Activated T-helper 2 cell treated with anti-CD3 and anti-CD28 coated beads, Interferon-gamma antibody, Interleukin-2, Interleukin-4, amounts not matched to agents 10 μg/mL and 5 μg/mL and 100 μg/mL, durations not matched to agents 14 hours and 24 hours and 36 hours (primary cell): ENCODE measurements at regions of chr6 and their contacts with region 1.

Region 1: GRCh38 chr6:111478749-111479148 is 4.3 kb downstream of the REV3L start:
- DNase-seq: no peak
- H3K4me3 Mint-ChIP-seq: no peak overlapping the region
- H3K27ac Mint-ChIP-seq: no peak overlapping the region
- H3K4me1 Mint-ChIP-seq: peaks cover 42% of the 10 kb centered on the region
- H3K27me3 Mint-ChIP-seq: no peaks in the 10 kb centered on the region

Region 2: DNA sequence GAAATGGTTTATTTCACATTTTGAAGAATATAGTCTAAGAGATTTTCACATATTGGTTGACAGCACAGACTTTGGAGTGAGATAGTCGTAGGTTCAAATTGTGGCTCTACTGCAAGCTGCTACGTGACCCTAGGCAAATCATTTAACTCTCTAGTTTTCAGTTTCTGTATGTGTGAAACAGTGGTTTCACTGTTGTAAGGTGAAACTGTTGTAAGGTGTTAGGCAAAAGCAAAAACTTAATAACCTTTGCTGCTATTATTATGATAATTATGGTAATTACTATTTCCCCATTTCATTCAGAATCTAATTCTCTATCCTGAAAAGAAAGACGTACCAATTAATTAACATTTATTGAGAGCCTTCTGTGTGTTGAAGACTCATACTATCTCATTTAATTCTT is 139.9 kb before region 1 on chr6:
- intact Hi-C with region 1: loop called (anchors 2 kb)
- DNase-seq: no peak
- H3K4me3 Mint-ChIP-seq: no peak overlapping the region
- H3K27ac Mint-ChIP-seq: peak overlapping the region; percentile 1
- H3K4me1 Mint-ChIP-seq: peaks cover 20% of the 10 kb centered on the region
- H3K27me3 Mint-ChIP-seq: no peaks in the 10 kb centered on the region

Region 3: DNA sequence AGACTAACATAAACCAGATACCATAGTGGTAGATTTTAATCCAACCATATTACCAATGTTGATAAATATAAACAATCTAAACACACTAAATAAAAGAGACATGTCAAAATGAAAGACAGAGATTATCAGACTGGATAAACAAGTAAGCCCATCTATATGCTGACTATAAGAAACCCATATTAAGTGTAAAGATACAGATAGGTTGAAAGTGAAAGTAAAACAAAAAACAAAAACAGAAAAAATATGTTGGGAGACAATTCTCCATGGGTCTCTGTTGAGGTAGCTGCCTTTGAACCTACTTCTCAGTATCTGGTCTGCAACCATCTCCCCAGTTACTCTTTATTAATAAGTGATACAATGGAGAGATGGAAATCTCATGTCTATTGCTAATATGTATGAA is 16.9 kb before region 1 on chr6:
- intact Hi-C with region 1: no loop called
- DNase-seq: no peak
- H3K4me3 Mint-ChIP-seq: peak overlapping the region; percentile 5
- H3K27ac Mint-ChIP-seq: no peak overlapping the region
- H3K4me1 Mint-ChIP-seq: peaks cover 17% of the 10 kb centered on the region
- H3K27me3 Mint-ChIP-seq: no peaks in the 10 kb centered on the region

Region 4: DNA sequence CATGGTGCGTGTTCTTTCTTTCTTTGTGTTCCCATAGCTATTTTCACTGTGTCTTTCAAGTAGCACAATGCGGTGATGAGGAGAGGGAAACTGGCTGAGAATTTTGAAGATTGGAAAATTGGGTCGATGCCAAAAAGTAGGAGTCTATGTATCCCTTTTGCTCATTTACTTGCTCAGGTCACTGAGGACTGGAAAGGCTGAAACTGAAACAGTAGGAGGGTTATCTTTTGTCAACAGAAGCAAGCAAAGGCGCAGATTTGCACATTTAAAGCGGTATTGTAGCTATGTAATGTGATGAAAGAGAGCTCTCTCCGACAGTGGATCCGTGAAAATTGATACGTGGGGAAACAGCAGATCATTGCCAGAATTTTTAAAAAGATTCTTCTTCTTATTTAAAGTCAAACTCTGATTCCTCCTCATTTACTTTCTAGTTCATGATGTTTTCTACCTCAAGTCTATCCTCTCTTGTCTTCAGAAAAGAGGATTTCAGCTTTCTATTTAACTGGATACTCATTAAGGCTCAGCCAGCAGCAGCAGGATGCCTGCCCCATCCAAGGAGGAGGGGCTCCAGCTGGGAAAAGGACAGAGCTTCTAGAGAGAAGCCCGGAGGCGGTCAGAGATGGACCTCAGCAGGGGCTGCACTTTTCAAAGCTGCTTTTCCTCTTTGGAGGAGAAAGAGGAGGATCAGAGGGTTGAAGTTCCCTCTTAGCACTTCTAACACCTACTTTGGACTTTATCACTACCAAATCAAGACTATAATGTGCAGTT is 410.4 kb after region 1 on chr6:
- intact Hi-C with region 1: no loop called
- DNase-seq: no peak
- H3K4me3 Mint-ChIP-seq: no peak overlapping the region
- H3K27ac Mint-ChIP-seq: no peak overlapping the region
- H3K4me1 Mint-ChIP-seq: no peaks in the 10 kb centered on the region
- H3K27me3 Mint-ChIP-seq: peaks cover 29% of the 10 kb centered on the region